ENCODE measurements at regions of chr11 and their contacts with region 1.

Region 1: GRCh38 chr11:33860926-33861325 is 30.9 kb downstream of the LMO2 start:
- DNase-seq: no peak
- H3K4me3 ChIP-seq: no peak overlapping the region
- H3K27ac ChIP-seq: peak overlapping the region in 2 of 8 donors; percentile 3 to 14
- H3K4me1 ChIP-seq: peaks cover 4 to 86% (median 46%) of the 10 kb centered on the region in 6 donors
- H3K27me3 ChIP-seq: no peaks in the 10 kb centered on the region
- CTCF ChIP-seq: no peak
- POLR2A ChIP-seq: no peak

Region 2: GRCh38 chr11:33970984-33971466 is 110.1 kb after region 1 on chr11:
- intact Hi-C with region 1: loop called (anchors 2 kb)
- DNase-seq: no peak
- H3K4me3 ChIP-seq: no peak overlapping the region
- H3K27ac ChIP-seq: peak overlapping the region in 5 of 8 donors; percentile 1 to 39 (median 5)
- H3K4me1 ChIP-seq: peaks cover 0 to 14% (median 5%) of the 10 kb centered on the region in 6 donors
- H3K27me3 ChIP-seq: no peaks in the 10 kb centered on the region
- CTCF ChIP-seq: peak; percentile 38 to 91 (median 69)
- POLR2A ChIP-seq: no peak

Measured in spleen (tissue), 13 donors.